Posterior vena cava (tissue), 2 donors: ENCODE measurements at regions of chrX and their contacts with region 1.

Region 1: DNA sequence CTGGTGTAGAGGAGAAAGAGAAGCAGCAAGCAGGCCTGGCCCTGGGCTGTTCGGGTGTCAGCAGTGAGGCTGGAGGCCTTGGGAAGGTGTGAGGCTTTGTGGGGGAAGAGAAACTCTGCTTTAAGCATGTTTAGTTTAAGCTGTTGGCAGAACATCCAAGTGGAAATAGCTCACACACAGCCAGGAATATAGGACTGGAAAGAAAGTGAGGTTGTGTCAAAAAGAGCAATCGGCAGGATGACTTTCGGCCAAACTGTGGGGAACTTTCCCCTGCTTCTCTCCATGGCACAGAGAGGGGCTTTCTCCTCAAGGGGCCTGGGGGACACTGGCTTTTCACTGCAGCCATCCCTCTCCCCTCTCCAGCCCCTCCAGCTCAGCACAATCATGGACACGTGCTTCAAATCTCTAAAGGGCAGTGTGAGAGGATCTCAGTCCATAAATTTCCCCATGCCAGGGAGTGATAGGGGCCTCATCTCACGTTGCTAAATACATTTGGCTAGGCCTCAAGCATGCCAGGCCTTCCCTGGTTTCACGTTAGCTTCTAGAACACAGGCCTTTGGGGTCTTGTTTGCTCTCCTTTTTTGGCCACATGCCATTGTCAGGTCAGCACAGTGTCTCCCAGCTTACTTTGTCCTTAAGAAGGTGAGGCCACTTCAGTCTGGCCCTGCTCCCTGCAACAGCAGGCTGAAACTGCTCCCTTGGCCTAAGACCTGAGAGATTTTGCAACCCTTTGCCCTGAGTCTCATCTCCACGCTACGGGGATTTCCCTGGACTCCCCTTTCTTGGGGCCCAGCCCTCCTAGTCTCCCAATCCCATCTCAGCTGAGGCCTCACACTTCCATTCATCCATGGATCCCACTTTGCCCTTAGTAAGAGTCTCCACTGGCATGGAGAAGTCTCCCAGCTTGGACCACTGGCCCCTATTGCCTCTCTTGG is 8.3 kb upstream of the CITED1 start:
- DNase-seq: no peak

Region 2: DNA sequence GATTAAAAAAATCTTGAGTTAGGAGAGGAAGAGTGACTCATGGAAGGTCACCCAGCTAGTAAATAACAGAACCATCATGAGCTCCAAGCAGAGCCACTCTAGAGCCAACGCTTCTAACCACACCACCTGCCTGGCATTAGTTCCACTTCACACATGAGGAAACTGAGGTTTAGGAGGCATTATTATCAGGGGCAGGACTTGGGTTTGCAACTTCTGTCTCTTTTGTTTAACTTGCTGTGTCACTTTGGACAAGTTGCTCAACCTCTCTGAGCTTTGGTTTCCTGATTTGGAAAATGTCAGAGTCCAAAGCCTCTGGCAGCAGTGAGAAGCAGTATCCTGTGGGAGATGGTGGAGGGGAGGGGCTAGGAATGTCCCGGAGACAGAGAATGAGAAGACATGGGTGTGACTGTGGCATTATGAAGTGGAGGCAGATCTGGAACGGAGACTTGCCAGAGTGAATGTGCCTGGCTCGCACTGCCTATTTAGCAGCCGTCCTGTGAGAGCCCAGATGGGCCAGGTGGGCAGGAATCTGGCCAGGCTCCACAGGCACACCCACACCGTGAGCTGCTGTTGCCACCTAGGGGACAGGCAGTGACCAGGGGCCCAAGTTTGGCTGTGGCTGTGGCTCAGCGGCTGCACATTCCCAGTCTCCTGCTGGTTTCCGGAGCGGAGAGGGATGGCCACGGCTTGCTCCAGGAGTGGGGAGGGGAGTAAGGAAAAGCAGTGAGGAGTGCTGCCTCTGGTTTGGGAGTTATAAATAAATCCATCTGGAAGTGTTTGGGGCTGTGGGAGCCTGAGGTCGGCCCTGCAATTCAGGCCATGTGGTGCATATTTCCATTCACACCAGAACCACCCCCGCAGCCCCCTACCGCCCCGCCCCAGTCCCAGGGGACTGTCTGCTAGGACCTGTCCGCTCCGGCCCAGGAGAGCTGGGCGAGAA is 309.9 kb before region 1 on chrX:
- intact Hi-C with region 1: no loop called
- DNase-seq: peak; percentile 85

Region 3: GRCh38 chrX:72276478-72276953 is 37.5 kb before region 1 on chrX:
- intact Hi-C with region 1: loop called in 1 of 2 experiments (anchors 1 kb)
- DNase-seq: no peak

Region 4: GRCh38 chrX:72330131-72330530 is 16.2 kb after region 1 on chrX:
- intact Hi-C with region 1: no loop called
- DNase-seq: no peak

Region 5: GRCh38 chrX:72349190-72349589 is 35.2 kb after region 1 on chrX:
- intact Hi-C with region 1: no loop called
- DNase-seq: no peak

Region 6: GRCh38 chrX:72371405-72371804 is 57.4 kb after region 1 on chrX:
- intact Hi-C with region 1: no loop called
- DNase-seq: no peak